PC-9 (cell line): ENCODE measurements at regions of chr6 and their contacts with region 1.

Region 1: GRCh38 chr6:27146706-27147505 is 100.6 kb upstream of the PRSS16 start:
- DNase-seq: peak; percentile 89 to 98
- H3K4me3 ChIP-seq: peak overlapping the region; percentile 91
- H3K27ac ChIP-seq: peak overlapping the region; percentile 75
- H3K4me1 ChIP-seq: peaks cover 2% of the 10 kb centered on the region; the same call in 1 of the 2 replicates
- H3K27me3 ChIP-seq: no peaks in the 10 kb centered on the region
- CTCF ChIP-seq: no peak

Region 2: GRCh38 chr6:26031595-26032339 is 1115.1 kb before region 1 on chr6:
- CTCF ChIA-PET with region 1: no interaction called
- POLR2A ChIA-PET with region 1: interaction called, 24 read pairs
- intact Hi-C with region 1: loop called (anchors 5 kb)
- DNase-seq: peak; percentile 91 to 95
- H3K4me3 ChIP-seq: peak overlapping the region; percentile 81
- H3K27ac ChIP-seq: peak overlapping the region; percentile 79
- H3K4me1 ChIP-seq: peaks cover 46% of the 10 kb centered on the region
- H3K27me3 ChIP-seq: no peaks in the 10 kb centered on the region
- CTCF ChIP-seq: no peak

Region 3: GRCh38 chr6:26183581-26184366 is 963.1 kb before region 1 on chr6:
- CTCF ChIA-PET with region 1: no interaction called
- POLR2A ChIA-PET with region 1: interaction called, 19 read pairs
- intact Hi-C with region 1: loop called (anchors 2 kb)
- DNase-seq: peak; percentile 72 to 87
- H3K4me3 ChIP-seq: peak overlapping the region; percentile 54
- H3K27ac ChIP-seq: peak overlapping the region; percentile 65
- H3K4me1 ChIP-seq: peaks cover 12% of the 10 kb centered on the region; the same call in 1 of the 2 replicates
- H3K27me3 ChIP-seq: no peaks in the 10 kb centered on the region
- CTCF ChIP-seq: no peak

Region 4: GRCh38 chr6:26216356-26216885 is 930.5 kb before region 1 on chr6:
- CTCF ChIA-PET with region 1: no interaction called
- POLR2A ChIA-PET with region 1: interaction called, 11 read pairs
- intact Hi-C with region 1: no loop called
- DNase-seq: peak; percentile 65 to 95
- H3K4me3 ChIP-seq: peak overlapping the region; percentile 72
- H3K27ac ChIP-seq: peak overlapping the region; percentile 80
- H3K4me1 ChIP-seq: 0 out of 2 replicates have a peak, but pooled peaks cover 14% of the 10 kb centered on the region
- H3K27me3 ChIP-seq: no peaks in the 10 kb centered on the region
- CTCF ChIP-seq: no peak

Region 5: GRCh38 chr6:27230758-27231111 is 83.8 kb after region 1 on chr6:
- CTCF ChIA-PET with region 1: no interaction called
- POLR2A ChIA-PET with region 1: interaction called, 11 read pairs
- intact Hi-C with region 1: no loop called
- DNase-seq: peak; percentile 25 to 41
- H3K4me3 ChIP-seq: peak overlapping the region; percentile 53
- H3K27ac ChIP-seq: peak overlapping the region; percentile 22; the same call in 1 of the 2 replicates
- H3K4me1 ChIP-seq: peaks cover 9% of the 10 kb centered on the region; the same call in 1 of the 2 replicates
- H3K27me3 ChIP-seq: no peaks in the 10 kb centered on the region
- CTCF ChIP-seq: no peak

Region 6: DNA sequence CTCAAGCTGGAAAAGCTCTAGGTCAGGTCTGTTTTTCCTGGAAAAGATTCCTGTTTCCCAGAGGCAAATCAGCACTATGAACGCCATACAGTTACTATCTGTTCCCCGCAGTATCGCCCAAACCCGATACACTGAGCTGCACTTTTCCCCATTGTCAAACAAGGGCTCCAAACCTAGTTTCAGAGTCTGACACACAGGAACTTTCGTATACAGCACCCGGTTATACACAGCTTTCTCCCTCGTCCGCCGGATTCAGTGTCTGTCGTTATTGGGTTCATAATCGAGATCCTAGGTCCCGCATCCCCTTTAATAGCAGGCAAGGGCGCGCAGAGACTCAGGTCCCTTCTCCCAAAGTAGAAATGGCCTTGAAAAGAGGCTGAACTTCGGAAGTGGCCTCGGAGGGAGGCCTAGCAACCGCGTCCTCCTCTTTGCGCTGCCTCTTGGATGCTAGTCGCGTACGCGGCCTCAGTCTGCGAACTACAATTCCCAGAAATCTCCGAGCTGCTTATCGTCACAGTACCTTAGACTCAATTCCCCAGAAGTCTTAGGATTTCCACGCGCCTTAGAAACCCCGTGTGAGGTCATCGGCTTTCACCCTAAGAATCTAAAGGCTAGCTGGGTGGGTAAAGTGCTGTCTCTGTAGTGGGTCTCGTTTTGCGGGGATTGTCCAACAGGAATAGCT is 275.9 kb after region 1 on chr6:
- CTCF ChIA-PET with region 1: no interaction called
- POLR2A ChIA-PET with region 1: no interaction called
- intact Hi-C with region 1: no loop called
- DNase-seq: no peak
- H3K4me3 ChIP-seq: no peak overlapping the region
- H3K27ac ChIP-seq: no peak overlapping the region
- H3K4me1 ChIP-seq: no peaks in the 10 kb centered on the region
- H3K27me3 ChIP-seq: peaks cover 27% of the 10 kb centered on the region
- CTCF ChIP-seq: no peak

Region 7: DNA sequence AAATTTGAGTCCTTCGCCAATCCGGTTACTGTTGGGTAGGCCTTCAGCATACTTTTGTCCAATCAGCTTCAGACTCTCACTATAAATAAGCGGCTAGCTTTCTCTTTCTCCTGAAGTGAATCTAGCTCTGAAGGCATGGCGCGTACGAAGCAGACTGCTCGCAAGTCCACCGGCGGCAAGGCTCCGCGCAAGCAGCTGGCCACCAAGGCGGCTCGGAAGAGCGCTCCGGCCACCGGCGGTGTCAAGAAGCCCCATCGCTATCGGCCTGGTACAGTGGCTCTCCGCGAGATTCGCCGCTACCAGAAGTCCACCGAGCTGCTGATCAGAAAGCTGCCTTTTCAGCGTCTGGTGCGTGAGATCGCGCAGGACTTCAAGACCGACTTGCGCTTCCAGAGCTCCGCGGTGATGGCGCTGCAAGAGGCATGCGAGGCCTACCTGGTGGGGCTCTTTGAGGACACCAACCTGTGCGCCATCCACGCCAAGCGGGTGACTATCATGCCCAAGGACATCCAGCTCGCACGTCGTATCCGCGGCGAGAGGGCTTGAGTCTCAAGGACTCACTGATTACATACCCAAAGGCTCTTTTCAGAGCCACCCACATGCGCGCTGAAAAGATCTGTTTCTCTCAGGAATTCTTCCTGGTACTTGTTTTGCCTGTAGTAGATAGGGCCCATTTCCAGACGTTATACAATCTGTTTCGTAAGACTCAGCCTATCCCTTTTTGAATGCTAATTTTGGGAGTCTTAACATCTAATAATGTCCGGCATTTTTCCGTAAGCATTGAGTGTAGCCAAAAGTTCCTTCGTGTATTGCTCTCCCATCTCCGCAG is 663.2 kb after region 1 on chr6:
- CTCF ChIA-PET with region 1: no interaction called
- POLR2A ChIA-PET with region 1: interaction called, 26 read pairs
- intact Hi-C with region 1: no loop called
- DNase-seq: peak; percentile 83 to 94
- H3K4me3 ChIP-seq: peak overlapping the region; percentile 72
- H3K27ac ChIP-seq: peak overlapping the region; percentile 70
- H3K4me1 ChIP-seq: peaks cover 38% of the 10 kb centered on the region
- H3K27me3 ChIP-seq: no peaks in the 10 kb centered on the region
- CTCF ChIP-seq: no peak

Region 8: DNA sequence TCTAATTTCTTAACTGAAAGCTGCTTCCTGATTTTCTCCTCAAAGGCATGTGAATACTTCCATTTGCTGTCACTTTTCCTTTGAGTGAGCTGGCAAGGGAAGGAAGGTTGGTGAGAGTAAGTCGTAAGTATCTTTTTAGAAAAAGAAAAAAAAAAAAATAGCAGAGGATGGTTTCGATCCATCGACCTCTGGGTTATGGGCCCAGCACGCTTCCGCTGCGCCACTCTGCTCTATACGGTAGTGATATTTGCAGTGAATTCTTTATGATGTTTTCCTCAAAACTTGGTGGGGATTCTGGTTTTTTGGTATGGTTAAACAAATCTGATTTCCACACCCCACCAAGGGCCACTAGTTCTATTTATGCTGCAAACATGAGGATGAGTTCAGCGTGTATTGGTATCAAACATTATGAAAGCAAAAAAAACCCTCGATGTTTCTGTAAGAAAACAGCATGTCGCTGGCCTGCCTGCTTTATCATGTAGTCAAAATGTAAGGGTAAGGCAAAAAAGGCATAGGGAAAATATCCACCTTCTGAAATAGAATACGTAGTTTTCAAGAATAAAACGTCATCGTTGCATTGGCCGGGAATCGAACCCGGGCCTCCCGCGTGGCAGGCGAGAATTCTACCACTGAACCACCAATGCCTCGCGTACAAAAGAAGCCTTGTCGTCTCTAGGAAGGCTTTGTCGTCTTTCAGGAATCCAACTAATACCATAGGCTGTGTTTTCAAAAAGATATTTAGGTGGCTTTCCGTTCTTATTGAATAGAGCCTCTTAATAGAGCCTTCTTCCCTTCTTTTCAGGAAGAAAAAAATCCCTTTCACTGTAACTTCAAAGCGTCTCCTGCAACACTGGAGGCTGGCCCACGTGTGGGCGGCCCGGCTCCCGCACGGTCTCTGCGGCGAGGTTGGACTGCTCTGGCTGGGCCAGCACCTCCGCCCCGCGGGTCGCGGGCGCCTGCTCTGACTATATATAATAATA is 755.7 kb after region 1 on chr6:
- CTCF ChIA-PET with region 1: interaction called, 6 read pairs
- POLR2A ChIA-PET with region 1: interaction called, 39 read pairs
- intact Hi-C with region 1: no loop called
- DNase-seq: peak; percentile 76 to 86
- H3K4me3 ChIP-seq: peak overlapping the region; percentile 73
- H3K27ac ChIP-seq: peak overlapping the region; percentile 74
- H3K4me1 ChIP-seq: peaks cover 9% of the 10 kb centered on the region
- H3K27me3 ChIP-seq: no peaks in the 10 kb centered on the region
- CTCF ChIP-seq: no peak